ENCODE measurements at regions of chr6 and their contacts with region 1.

Region 1: GRCh38 chr6:73722318-73723060 is 26.5 kb downstream of the CD109 start:
- DNase-seq: peak; percentile 21
- H3K4me3 Mint-ChIP-seq: peak overlapping the region; percentile 12
- H3K27ac Mint-ChIP-seq: peak overlapping the region; percentile 84
- H3K4me1 Mint-ChIP-seq: peaks cover 43% of the 10 kb centered on the region
- H3K27me3 Mint-ChIP-seq: no peaks in the 10 kb centered on the region

Region 2: GRCh38 chr6:73451223-73452107 is 271.0 kb before region 1 on chr6:
- intact Hi-C with region 1: loop called (anchors 10 kb)
- DNase-seq: peak; percentile 22
- H3K4me3 Mint-ChIP-seq: peak overlapping the region; percentile 97
- H3K27ac Mint-ChIP-seq: peak overlapping the region; percentile 87
- H3K4me1 Mint-ChIP-seq: peaks cover 35% of the 10 kb centered on the region
- H3K27me3 Mint-ChIP-seq: no peaks in the 10 kb centered on the region

Region 3: DNA sequence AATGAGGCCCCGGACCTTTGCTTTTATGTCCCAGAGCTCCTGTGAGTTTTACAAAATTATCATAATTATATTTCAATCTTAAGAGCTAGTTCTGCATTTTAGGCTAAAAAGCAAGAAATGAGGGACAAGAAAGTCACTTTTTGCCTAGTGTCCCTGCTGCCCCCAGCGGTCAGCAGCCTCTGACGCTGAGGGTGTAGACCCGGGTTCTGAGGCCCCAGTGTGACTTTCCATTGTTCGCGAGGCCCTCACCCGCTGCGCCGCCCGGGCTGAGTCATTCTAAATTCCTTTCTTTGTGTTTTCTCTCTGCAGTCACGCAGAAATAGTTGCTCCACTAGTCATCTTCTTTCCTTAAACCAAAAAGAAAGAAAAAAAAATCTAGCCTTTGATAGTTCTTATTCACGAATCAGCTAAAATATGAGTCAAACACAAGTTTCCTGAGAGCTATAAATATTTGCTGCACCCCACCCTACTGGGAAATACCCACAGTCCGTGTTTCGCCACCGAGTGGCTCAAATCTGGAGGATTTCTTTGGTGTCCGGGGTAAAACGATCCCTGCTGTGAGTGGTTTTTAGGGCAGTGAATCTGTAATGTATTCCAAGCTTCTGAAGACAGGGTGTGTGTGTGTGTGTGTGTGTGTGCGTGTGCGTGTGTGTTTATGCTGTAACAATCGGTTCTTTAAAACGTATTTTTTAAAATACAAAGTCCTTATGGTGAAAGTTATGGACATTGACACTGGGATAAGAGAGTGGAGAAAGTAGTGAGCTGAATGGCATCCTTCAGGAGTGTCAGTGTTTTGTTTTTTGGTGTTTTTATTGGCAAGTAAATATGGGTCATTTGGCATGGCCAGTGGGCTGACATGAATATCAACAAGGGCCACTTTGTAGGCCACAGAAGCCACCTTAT is 142.0 kb before region 1 on chr6:
- intact Hi-C with region 1: loop called (anchors 10 kb)
- DNase-seq: peak; percentile 47
- H3K4me3 Mint-ChIP-seq: peak overlapping the region; percentile 69
- H3K27ac Mint-ChIP-seq: peak overlapping the region; percentile 95
- H3K4me1 Mint-ChIP-seq: peaks cover 27% of the 10 kb centered on the region
- H3K27me3 Mint-ChIP-seq: no peaks in the 10 kb centered on the region

Region 4: GRCh38 chr6:73704260-73704659 is 18.2 kb before region 1 on chr6:
- intact Hi-C with region 1: loop called (anchors 1 kb)
- DNase-seq: no peak
- H3K4me3 Mint-ChIP-seq: no peak overlapping the region
- H3K27ac Mint-ChIP-seq: peak overlapping the region; percentile 86
- H3K4me1 Mint-ChIP-seq: peaks cover 28% of the 10 kb centered on the region
- H3K27me3 Mint-ChIP-seq: no peaks in the 10 kb centered on the region

Region 5: DNA sequence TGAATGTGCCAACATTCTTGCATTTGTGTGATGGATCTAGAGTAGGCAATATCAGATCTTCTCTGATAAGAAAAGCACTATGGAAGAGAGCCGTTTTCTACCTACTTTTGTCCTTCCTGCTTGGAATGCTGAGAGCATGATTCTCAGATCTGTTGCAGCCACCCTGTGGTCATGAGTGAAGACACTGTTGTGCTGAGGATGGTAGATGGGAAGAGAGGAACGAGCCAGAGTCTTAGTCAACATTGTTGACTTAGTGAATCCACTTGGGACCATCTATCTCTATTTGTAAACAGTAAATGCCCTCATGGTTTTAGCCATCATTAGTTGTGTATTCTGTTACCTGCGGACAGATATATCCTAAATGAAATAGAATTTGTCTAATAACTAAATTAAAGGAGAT is 176.1 kb after region 1 on chr6:
- intact Hi-C with region 1: no loop called
- DNase-seq: no peak
- H3K4me3 Mint-ChIP-seq: no peak overlapping the region
- H3K27ac Mint-ChIP-seq: no peak overlapping the region
- H3K4me1 Mint-ChIP-seq: no peaks in the 10 kb centered on the region
- H3K27me3 Mint-ChIP-seq: no peaks in the 10 kb centered on the region